Activated naive CD4-positive, alpha-beta T cell treated with anti-CD3 and anti-CD28 coated beads for 36 hours (primary cell): ENCODE measurements at regions of chr13 and their contacts with region 1.

Region 1: GRCh38 chr13:50170447-50171037 is 155.3 kb downstream of the KCNRG start:
- DNase-seq: no peak
- H3K4me3 Mint-ChIP-seq: no peak overlapping the region
- H3K27ac Mint-ChIP-seq: no peak overlapping the region
- H3K4me1 Mint-ChIP-seq: peaks cover 18% of the 10 kb centered on the region
- H3K27me3 Mint-ChIP-seq: peaks cover 6% of the 10 kb centered on the region

Region 2: GRCh38 chr13:49985129-49985528 is 185.4 kb before region 1 on chr13:
- CTCF ChIA-PET with region 1: no interaction called
- intact Hi-C with region 1: no loop called
- DNase-seq: no peak
- H3K4me3 Mint-ChIP-seq: no peak overlapping the region
- H3K27ac Mint-ChIP-seq: no peak overlapping the region
- H3K4me1 Mint-ChIP-seq: no peaks in the 10 kb centered on the region
- H3K27me3 Mint-ChIP-seq: no peaks in the 10 kb centered on the region

Region 3: GRCh38 chr13:50130123-50130946 is 40.2 kb before region 1 on chr13:
- CTCF ChIA-PET with region 1: no interaction called
- intact Hi-C with region 1: loop called (anchors 1 kb)
- DNase-seq: peak; percentile 24
- H3K4me3 Mint-ChIP-seq: peak overlapping the region; percentile 66
- H3K27ac Mint-ChIP-seq: peak overlapping the region; percentile 50
- H3K4me1 Mint-ChIP-seq: peaks cover 62% of the 10 kb centered on the region
- H3K27me3 Mint-ChIP-seq: peaks cover 60% of the 10 kb centered on the region

Region 4: DNA sequence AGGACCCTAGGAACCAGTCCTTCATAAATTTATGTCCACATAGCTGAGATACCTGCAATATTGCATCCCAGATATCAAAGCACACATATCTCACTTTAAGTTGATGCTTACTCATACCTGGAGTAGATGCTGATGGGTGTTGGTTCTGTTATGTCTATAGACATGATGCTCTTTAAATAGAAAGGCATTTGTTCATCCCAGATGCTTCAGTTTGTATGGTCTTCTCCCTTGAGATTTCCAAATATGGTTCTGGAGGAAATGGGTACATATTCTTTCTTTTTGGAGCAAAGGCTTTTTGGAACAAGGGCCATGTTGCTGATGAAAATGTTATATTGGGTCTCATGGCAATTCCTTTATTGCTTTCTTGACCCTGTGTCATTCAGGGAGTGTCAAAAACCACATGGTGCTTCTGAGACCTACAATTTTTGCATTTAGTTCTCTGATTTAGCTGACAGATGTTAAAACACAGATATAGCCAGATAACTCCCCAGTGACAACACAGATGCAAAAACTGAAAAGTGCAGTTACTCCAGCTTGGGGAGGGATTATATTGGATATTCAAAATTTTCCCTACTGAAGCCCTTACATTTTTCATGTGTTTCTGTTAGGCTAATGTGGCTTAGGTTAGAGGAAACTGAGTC is 56.1 kb after region 1 on chr13:
- CTCF ChIA-PET with region 1: interaction called, 3 read pairs
- intact Hi-C with region 1: loop called (anchors 1 kb)
- DNase-seq: no peak
- H3K4me3 Mint-ChIP-seq: no peak overlapping the region
- H3K27ac Mint-ChIP-seq: no peak overlapping the region
- H3K4me1 Mint-ChIP-seq: peaks cover 54% of the 10 kb centered on the region
- H3K27me3 Mint-ChIP-seq: peaks cover 15% of the 10 kb centered on the region

Region 5: DNA sequence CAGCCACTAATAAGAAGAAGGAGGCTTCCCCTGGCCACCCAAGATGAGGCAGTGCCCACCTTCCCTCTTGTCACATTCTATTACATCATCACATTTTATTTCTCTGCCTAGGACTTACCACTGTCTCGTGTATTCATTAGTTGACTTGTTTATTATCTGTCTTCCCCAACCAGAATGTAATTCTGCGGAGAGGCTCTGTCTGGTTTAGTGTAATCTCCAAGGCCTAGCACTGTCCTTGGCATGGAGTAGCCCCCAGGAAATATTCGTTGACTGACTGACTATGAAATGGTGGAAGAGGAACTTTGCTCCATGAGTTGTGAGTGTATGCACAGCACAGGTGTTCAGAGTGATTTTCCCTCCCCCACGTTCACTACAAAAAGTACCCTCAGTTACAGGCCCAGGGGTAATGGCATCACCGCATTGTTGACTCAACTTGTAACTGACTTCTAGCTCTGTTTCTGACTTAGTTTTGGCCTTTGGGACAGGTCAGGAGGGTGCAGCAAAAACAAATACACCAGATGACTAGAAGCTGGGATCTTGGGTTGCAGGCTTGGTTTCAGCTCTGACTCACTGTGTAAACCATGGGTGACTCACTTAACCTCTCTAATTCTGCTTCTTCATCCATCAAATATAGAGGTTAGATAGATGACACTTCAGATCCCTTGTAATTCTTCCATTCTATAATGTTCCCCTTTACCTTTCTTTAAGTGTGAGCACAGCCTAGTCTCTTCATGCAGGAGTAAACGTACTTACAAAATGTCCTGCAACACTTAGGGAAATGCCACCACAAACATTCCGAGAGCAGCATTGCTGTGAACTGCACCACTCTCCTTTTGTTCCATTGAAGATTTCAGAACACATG is 74.4 kb after region 1 on chr13:
- CTCF ChIA-PET with region 1: no interaction called
- intact Hi-C with region 1: loop called (anchors 1 kb)
- DNase-seq: peak; percentile 84
- H3K4me3 Mint-ChIP-seq: no peak overlapping the region
- H3K27ac Mint-ChIP-seq: peak overlapping the region; percentile 72
- H3K4me1 Mint-ChIP-seq: peaks cover 30% of the 10 kb centered on the region
- H3K27me3 Mint-ChIP-seq: peaks cover 13% of the 10 kb centered on the region

Region 6: DNA sequence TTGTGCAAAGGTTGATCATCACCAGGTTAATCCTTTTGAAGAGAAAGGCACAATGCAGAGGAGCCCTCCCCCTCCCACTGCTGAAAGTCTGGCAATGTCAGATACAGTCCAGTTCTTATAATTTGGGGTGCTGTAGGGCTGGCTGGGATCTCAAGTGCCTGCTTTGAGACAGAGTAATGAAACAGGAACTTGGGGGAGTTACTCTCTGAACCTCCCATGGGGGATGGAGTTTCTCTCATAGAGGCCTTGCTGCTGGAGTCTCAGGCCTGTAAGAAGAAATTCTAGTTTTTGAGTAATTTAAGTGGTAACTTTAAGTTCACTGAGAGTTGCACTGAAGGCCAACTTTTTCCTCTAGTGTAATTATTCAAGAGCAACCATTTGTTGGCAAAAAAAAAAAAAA is 255.2 kb after region 1 on chr13:
- CTCF ChIA-PET with region 1: no interaction called
- intact Hi-C with region 1: loop called (anchors 5 kb)
- DNase-seq: no peak
- H3K4me3 Mint-ChIP-seq: no peak overlapping the region
- H3K27ac Mint-ChIP-seq: no peak overlapping the region
- H3K4me1 Mint-ChIP-seq: peaks cover 23% of the 10 kb centered on the region
- H3K27me3 Mint-ChIP-seq: no peaks in the 10 kb centered on the region